HepG2 (cell line): ENCODE measurements at regions of chr6 and their contacts with region 1.

Region 1: DNA sequence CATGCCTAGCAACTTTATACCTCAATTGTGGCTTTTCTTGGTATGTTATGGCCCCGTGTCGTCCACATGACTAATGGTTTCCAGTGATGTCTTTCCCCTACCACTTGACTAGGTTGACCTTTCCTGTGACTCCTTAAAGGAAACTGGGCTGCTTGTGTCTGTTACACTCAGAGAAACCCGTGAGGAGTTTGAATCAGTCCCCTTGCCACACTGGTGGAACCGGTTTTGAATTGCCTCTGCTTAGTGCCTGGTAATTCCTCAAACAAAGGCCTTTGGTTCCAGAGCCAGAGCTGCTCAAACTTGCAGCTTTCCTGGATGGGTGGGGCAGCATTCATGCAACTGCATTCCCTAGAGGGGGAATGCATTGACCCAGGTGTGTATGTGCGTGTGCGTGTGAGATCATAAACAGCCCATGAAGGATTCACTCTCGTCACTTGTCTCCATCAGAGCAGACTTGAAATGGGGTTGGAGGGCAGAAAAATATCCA is 22.0 kb downstream of the ECT2L start:
- DNase-seq: no peak
- ATAC-seq: no peak
- H3K4me3 ChIP-seq: no peak overlapping the region
- H3K27ac ChIP-seq: no peak overlapping the region
- H3K4me1 ChIP-seq: peaks cover 57% of the 10 kb centered on the region
- H3K27me3 ChIP-seq: peaks cover 0 to 13% of the 10 kb centered on the region in 2 experiments; a peak in 1 of 5 replicates
- CTCF ChIP-seq: no peak
- EP300 ChIP-seq: no peak
- POLR2A ChIP-seq: no peak
- RAD21 ChIP-seq: no peak

Region 2: DNA sequence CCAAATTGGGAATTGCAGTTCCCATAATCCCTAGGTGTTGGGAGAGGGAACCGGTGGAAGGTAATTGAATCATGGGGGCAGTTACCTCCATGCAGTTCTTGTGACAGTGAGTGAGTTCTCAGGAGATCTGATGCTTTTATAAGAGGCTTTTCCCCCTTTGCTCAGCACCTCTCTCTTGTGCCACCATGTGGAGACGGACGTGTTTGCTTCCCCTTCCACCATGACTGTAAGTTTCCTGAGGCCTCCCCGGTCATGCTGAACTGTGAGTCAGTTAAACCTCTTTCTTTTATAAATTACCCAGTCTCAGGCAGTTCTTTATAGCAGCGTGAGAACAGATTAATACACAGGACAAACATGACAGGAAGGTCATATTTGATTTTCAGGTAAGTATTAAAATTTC is 291.7 kb after region 1 on chr6:
- CTCF ChIA-PET with region 1: interaction called, 9 read pairs
- POLR2A ChIA-PET with region 1: no interaction called
- in situ Hi-C with region 1: loop called (anchors 5 kb)
- intact Hi-C with region 1: loop called (anchors 1 kb)
- DNase-seq: peak; percentile 51
- ATAC-seq: peak; percentile 88
- H3K4me3 ChIP-seq: no peak overlapping the region
- H3K27ac ChIP-seq: no peak overlapping the region
- H3K4me1 ChIP-seq: no peaks in the 10 kb centered on the region
- H3K27me3 ChIP-seq: no peaks in the 10 kb centered on the region; a peak in 1 of 5 replicates
- CTCF ChIP-seq: peak; percentile 75
- EP300 ChIP-seq: no peak
- POLR2A ChIP-seq: no peak
- RAD21 ChIP-seq: peak; percentile 37; the same call in 1 of the 2 replicates